MCF 10A (cell line): ENCODE measurements at regions of chr2 and their contacts with region 1.

Region 1: DNA sequence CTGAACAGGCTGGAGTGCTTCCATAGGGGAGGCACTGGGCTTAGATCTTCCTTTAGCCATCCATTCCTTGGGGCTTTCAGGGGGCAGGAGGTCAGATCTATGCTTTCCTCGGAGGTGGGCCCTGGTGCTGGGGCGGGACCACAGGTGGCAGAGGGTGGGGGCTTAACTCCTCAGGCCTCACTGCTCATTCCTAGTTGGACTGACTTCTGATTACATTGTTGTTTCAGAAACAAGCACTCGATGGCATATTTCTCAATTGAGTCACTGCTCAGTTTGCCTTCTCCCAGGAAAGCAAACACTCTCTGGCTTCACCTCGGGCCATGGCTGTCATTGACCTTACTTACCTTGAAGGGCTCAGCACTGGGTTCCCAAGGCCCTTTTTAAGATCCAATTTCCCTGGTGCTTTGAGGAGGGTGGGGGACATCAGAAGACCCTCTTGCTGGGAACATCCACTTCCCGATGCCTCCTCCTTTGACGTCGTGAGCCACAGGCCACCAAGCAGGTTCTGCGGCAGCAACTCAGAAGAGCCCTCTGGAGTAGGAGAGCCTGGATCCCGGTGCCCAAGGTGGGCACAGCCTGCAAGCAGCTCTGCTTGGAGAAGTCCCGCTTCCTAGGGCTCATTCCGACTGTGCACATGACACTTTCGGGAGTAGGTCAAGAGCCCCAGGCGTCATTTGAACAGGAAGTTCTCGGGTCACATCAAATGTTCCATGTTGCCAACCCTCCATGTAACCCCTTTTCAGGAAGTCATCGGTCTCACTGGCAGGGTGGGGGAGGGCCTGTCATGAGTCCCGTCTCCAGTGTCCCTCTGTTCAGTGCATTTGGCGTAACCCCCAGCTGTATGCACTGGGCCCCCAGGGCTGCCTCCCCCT is 40.6 kb downstream of the SDC1 start:
- DNase-seq: peak; percentile 76
- H3K4me3 Mint-ChIP-seq: no peak overlapping the region
- H3K27ac Mint-ChIP-seq: peak overlapping the region; percentile 28
- H3K4me1 Mint-ChIP-seq: peaks cover 28% of the 10 kb centered on the region
- H3K27me3 Mint-ChIP-seq: no peaks in the 10 kb centered on the region
- CTCF ChIP-seq: no peak

Region 2: DNA sequence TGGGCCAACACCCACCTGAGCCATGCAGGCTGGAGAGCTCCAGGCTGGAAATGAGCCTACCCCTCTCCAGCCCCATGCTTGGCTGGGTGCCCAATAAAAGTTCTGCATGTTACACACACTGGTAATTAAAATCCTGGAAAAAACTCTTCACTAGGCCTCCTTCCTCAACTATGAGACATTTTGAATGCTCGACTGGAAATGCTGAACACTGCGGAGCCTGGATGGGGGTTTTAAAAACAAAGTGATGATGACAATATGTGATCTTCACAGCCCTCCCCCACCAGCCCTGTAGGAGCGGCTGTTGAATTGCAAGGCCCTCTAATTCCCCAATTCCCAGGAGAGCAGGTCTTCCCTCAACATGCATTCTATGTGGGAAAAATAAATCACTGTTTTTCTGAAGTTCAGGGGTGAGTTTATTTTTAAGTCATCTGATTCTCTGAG is 461.8 kb before region 1 on chr2:
- CTCF ChIA-PET with region 1: no interaction called
- POLR2A ChIA-PET with region 1: no interaction called
- intact Hi-C with region 1: no loop called
- DNase-seq: no peak
- H3K4me3 Mint-ChIP-seq: no peak overlapping the region
- H3K27ac Mint-ChIP-seq: no peak overlapping the region
- H3K4me1 Mint-ChIP-seq: no peaks in the 10 kb centered on the region
- H3K27me3 Mint-ChIP-seq: no peaks in the 10 kb centered on the region
- CTCF ChIP-seq: no peak

Region 3: DNA sequence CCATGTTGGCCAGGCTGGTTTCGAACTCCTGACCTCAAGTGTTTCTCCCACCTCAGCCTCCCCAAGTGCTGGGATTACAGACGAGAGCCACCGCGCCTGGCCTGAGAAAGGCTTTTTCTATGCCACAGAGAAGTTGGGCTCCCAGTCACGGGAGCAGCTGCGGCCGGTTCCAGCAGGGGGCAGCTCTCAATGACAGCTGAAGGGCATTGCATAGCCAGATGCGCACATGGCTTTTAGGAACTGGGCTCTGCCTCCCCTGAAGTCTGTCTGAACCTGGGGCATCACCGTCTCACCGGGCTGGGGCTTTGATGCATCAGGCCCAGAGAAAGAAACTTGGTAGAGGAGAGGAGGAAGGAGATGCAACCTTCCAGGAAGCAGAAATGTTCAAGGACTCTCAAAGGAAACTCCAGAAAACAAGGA is 48.7 kb before region 1 on chr2:
- CTCF ChIA-PET with region 1: interaction called, 31 read pairs
- POLR2A ChIA-PET with region 1: interaction called, 9 read pairs
- intact Hi-C with region 1: loop called (anchors 2 kb)
- DNase-seq: peak; percentile 68
- H3K4me3 Mint-ChIP-seq: no peak overlapping the region
- H3K27ac Mint-ChIP-seq: no peak overlapping the region
- H3K4me1 Mint-ChIP-seq: peaks cover 21% of the 10 kb centered on the region
- H3K27me3 Mint-ChIP-seq: no peaks in the 10 kb centered on the region
- CTCF ChIP-seq: peak; percentile 72

Region 4: DNA sequence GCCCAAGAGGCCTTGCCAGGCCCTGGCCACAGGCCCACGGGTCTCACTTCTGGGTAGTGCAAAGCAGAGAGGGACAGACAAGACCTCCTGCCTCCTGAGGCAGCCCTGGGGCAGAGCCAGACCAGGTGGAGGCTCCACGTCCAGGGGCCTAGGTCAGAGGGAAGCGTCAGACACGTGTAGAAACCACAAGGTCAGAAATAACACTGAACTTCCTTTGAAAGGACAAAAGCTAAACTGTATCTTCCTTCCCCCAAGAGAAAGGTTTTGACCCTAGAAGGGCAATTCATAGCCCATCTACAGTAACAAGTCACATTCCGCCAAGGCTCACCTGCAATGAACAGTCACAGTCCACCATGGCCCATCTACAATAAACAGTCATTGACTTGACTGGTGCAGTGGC is 22.7 kb after region 1 on chr2:
- CTCF ChIA-PET with region 1: interaction called, 46 read pairs
- POLR2A ChIA-PET with region 1: interaction called, 33 read pairs
- intact Hi-C with region 1: loop called (anchors 1 kb)
- DNase-seq: no peak
- H3K4me3 Mint-ChIP-seq: no peak overlapping the region
- H3K27ac Mint-ChIP-seq: peak overlapping the region; percentile 94
- H3K4me1 Mint-ChIP-seq: peaks cover 48% of the 10 kb centered on the region
- H3K27me3 Mint-ChIP-seq: no peaks in the 10 kb centered on the region
- CTCF ChIP-seq: no peak

Region 5: GRCh38 chr2:20225294-20226151 is 41.2 kb after region 1 on chr2:
- CTCF ChIA-PET with region 1: interaction called, 57 read pairs
- POLR2A ChIA-PET with region 1: interaction called, 77 read pairs
- intact Hi-C with region 1: loop called (anchors 1 kb)
- DNase-seq: peak; percentile 81
- H3K4me3 Mint-ChIP-seq: peak overlapping the region; percentile 75
- H3K27ac Mint-ChIP-seq: peak overlapping the region; percentile 59
- H3K4me1 Mint-ChIP-seq: peaks cover 25% of the 10 kb centered on the region
- H3K27me3 Mint-ChIP-seq: no peaks in the 10 kb centered on the region
- CTCF ChIP-seq: peak; percentile 79

Region 6: DNA sequence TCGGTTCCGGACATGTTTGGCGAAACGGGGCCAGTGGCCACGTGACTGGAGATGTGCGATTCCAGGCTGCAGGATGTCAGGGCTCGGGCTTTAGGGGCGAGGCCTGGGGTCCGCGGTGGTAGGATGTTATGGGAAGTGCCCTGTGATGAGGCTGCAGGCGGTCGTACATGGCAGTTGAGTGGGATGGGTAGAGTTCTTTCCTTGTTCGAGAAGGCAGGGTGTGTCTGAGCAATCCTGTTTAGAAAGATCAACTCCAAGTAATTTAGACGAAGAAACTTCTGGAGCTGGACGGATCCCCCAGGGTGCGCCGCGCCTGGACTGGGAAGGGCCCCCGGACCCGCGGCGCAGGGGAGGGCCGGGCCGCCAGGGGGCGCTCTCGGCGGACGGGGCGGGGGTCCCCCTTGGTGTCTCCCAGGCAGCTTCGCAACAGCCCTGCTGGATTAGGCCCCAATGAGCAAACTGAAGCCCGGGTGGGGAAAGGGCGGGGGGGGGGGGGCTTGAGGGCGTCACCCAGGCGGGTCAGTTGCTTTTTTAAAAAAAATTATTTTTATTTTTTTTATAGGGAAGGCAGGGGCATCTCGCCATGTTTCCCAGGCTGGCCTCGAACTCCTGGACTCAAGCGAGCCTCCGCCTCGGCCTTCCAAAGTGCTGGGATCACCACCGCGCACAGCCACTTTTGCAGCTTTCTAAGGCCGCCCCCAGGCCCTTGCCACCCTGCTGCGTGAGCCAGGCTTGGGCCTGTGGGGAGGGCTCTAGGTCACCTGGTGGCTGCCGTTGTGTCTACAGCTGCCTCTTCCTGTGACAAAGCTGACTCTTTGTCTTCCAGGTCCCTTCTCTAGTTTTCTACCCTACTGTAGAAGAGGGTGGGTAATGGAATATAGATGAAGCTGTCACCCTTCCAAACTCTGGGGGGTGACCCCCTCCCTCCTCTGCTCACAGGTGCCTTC is 58.0 kb after region 1 on chr2:
- CTCF ChIA-PET with region 1: interaction called, 10 read pairs
- POLR2A ChIA-PET with region 1: no interaction called
- intact Hi-C with region 1: no loop called
- DNase-seq: no peak
- H3K4me3 Mint-ChIP-seq: no peak overlapping the region
- H3K27ac Mint-ChIP-seq: no peak overlapping the region
- H3K4me1 Mint-ChIP-seq: peaks cover 10% of the 10 kb centered on the region
- H3K27me3 Mint-ChIP-seq: no peaks in the 10 kb centered on the region
- CTCF ChIP-seq: peak; percentile 66

Region 7: GRCh38 chr2:20411361-20411894 is 227.1 kb after region 1 on chr2:
- CTCF ChIA-PET with region 1: no interaction called
- POLR2A ChIA-PET with region 1: no interaction called
- intact Hi-C with region 1: no loop called
- DNase-seq: peak; percentile 88
- H3K4me3 Mint-ChIP-seq: no peak overlapping the region
- H3K27ac Mint-ChIP-seq: no peak overlapping the region
- H3K4me1 Mint-ChIP-seq: peaks cover 23% of the 10 kb centered on the region
- H3K27me3 Mint-ChIP-seq: no peaks in the 10 kb centered on the region
- CTCF ChIP-seq: peak; percentile 74